ENCODE measurements at regions of chr16 and their contacts with region 1.

Region 1: GRCh38 chr16:4183237-4184036 is 58.4 kb downstream of the SRL start:
- DNase-seq: no peak
- H3K4me3 ChIP-seq: peak overlapping the region; percentile 56 to 81 (median 68)
- H3K27ac ChIP-seq: peak overlapping the region; percentile 94 to 98 (median 96)
- H3K4me1 ChIP-seq: peaks cover 13 to 39% (median 16%) of the 10 kb centered on the region in 3 donors
- H3K27me3 ChIP-seq: no peaks in the 10 kb centered on the region
- CTCF ChIP-seq: peak in 1 of 6 experiments; percentile 36
- POLR2A ChIP-seq: peak in 3 of 4 donors; percentile 71 to 87 (median 79)

Region 2: DNA sequence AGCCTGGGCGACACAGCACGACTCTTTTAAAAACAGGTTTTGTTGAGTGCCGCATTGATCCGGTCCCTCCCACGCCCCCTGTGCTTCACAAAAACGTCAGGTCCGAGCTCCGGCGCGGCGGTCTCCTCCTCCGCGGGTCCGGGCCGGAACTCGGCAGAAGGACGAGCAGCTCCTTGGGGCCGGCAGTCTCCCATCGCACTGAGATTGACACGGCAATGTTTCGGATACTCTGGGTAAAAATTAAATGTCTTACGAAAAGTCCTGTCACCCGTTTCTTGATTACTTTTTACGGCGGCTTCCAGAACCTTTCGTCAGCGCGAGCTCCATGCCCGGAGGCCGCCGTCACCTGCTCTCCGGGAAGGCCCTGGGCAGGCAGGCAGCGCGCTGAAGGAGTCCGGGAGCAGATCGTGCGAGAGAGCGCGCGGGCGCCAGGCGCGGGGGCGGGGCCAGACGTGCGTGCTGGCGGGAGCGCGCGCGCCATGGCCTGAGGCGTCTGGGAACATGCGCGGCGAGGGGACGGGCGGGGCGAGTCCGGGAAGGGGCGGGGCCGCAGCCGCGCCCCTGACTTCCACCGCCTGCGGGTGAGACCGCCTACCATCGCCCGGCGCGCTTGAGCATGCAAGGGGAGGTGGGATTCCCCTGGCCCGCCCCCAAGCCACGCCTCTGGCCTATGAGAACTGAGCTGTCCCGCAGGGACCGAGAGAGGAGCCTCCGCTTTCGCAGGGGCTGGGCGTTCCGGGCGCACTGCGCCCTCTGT is 70.1 kb after region 1 on chr16:
- intact Hi-C with region 1: loop called (anchors 5 kb)
- DNase-seq: peak; percentile 98
- H3K4me3 ChIP-seq: peak overlapping the region; percentile 53 to 73 (median 65)
- H3K27ac ChIP-seq: peak overlapping the region; percentile 91 to 95 (median 94)
- H3K4me1 ChIP-seq: peaks cover 0 to 14% (median 3%) of the 10 kb centered on the region in 3 donors
- H3K27me3 ChIP-seq: no peaks in the 10 kb centered on the region
- CTCF ChIP-seq: no peak
- POLR2A ChIP-seq: peak in 2 of 4 donors; percentile 64 to 70

Region 3: DNA sequence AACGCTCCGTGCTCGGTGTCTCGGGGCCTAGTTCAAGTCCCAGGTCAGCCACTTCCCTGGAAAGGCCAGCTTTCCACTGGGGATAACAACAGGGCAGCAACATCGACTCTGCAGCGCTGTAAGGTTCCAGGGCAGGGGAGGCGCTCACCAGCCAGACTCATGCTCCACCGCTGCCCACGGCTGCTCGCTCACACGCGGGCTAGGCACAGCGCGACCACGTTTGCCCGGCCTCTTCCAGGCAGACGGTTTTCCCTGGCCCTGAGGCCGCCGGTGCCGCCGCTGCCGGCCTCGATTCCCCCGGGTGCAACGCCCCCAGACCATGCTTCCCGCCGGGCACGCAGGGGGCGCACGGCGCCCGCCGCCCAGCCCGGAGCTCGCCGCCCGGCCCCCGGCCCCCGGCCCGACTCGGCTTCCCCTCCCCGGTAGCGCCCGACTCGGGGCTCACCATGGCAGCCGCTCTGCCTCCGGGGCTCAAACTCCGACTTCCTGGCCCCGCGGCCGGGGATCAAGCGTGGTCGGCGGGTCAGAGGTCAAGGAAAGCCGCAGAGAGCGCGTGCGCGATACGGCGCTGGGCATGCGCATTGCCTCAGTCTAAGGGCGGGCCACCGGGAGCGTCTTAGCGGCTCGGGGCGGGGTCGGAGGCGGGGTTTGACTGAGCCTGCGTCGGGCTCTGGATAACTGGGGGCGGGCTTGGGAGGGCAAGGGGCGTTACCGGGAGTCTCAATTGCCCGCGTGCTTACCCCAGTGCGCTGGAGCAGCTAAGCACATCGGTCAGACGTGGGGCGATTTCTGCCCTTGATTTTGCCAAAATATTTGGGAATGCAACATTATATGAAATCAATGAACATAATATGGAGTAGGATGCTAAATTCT is 167.6 kb after region 1 on chr16 and contains the start of gene PAM16:
- intact Hi-C with region 1: no loop called
- DNase-seq: peak; percentile 74
- H3K4me3 ChIP-seq: peak within 1 kb of the TSS; percentile 67 to 98 (median 92)
- H3K27ac ChIP-seq: peak within 1 kb of the TSS; percentile 73 to 96 (median 90)
- H3K4me1 ChIP-seq: peaks cover 19 to 53% (median 22%) of the 10 kb centered on the region in 3 donors
- H3K27me3 ChIP-seq: no peaks in the 10 kb centered on the region
- CTCF ChIP-seq: peak in 2 of 6 experiments; percentile 10 to 16
- POLR2A ChIP-seq: peak in 2 of 4 donors; percentile 16 to 48
- total RNA-seq, gene PAM16: 29.5 to 40.8 (median 33.2) TPM

Measured in esophagus squamous epithelium (tissue), 5 donors.